ENCODE measurements at regions of chr5 and their contacts with region 1.

Region 1: GRCh38 chr5:113513384-113514288 is at the start of gene YTHDC2:
- DNase-seq: peak; percentile 88
- H3K4me3 ChIP-seq: peak within 1 kb of the TSS; percentile 48 to 83 (median 60)
- H3K27ac ChIP-seq: peak within 1 kb of the TSS; percentile 87 to 94 (median 90)
- H3K4me1 ChIP-seq: peaks cover 0 to 25% (median 10%) of the 10 kb centered on the region in 4 donors
- H3K27me3 ChIP-seq: no peaks in the 10 kb centered on the region
- CTCF ChIP-seq: peak in 4 of 5 experiments; percentile 4 to 38 (median 10)
- EP300 ChIP-seq: no peak
- POLR2A ChIP-seq: peak; percentile 71
- total RNA-seq, gene YTHDC2: 23.6 to 35.4 (median 27.6) TPM

Region 2: DNA sequence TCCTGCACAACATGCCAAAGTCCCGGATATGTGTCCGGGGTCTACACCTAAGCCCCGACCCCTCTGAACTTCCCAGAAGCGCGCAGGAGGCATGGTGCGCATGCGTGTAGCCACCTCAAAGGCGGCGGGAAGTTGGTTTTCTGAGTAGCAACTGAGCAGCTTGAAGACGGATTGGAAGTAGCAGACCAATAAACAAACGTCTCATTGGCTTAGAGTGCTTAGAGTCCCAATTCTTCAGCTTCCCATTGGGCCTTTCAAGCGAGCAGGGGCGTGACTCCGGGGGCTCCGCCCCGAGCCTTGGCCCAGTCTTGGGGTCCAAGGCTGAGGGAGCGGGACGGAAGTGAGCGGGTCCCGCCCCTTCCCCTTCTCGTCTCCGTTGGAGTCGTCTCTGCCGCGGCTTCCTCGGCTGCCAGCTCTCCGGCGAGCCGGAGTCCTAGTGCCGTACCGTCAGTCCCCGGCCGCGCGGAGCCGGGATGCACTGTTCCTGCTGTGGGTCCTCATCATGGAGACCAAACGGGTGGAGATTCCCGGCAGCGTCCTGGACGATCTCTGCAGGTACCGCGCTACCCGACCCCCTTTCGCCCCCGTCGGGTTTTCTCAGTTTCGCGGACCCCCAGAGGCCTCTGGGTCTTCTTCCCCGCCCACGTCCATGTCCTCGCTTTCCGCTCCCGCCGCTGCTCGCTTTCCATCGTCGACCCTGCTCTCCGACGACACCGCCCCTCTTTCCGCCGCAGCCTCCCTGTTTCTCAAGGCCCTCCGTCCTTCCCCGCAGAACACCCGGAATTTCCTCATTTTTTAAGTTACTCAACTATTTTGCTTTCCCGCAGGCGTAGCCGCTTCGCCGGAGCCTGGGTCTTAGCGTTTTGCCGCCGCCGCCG is 537.0 kb before region 1 on chr5 and contains the start of gene DCP2:
- in situ Hi-C with region 1: loop called in 3 of 4 experiments (anchors 25 kb)
- intact Hi-C with region 1: no loop called
- DNase-seq: peak; percentile 95
- H3K4me3 ChIP-seq: peak within 1 kb of the TSS; percentile 72 to 99 (median 86)
- H3K27ac ChIP-seq: peak within 1 kb of the TSS; percentile 91 to 96 (median 93)
- H3K4me1 ChIP-seq: peaks cover 5 to 25% (median 15%) of the 10 kb centered on the region in 4 donors
- H3K27me3 ChIP-seq: no peaks in the 10 kb centered on the region
- CTCF ChIP-seq: peak in 1 of 5 experiments; percentile 12
- EP300 ChIP-seq: no peak
- POLR2A ChIP-seq: peak; percentile 83
- total RNA-seq, gene DCP2: 11.6 to 27.8 (median 20.7) TPM

Region 3: DNA sequence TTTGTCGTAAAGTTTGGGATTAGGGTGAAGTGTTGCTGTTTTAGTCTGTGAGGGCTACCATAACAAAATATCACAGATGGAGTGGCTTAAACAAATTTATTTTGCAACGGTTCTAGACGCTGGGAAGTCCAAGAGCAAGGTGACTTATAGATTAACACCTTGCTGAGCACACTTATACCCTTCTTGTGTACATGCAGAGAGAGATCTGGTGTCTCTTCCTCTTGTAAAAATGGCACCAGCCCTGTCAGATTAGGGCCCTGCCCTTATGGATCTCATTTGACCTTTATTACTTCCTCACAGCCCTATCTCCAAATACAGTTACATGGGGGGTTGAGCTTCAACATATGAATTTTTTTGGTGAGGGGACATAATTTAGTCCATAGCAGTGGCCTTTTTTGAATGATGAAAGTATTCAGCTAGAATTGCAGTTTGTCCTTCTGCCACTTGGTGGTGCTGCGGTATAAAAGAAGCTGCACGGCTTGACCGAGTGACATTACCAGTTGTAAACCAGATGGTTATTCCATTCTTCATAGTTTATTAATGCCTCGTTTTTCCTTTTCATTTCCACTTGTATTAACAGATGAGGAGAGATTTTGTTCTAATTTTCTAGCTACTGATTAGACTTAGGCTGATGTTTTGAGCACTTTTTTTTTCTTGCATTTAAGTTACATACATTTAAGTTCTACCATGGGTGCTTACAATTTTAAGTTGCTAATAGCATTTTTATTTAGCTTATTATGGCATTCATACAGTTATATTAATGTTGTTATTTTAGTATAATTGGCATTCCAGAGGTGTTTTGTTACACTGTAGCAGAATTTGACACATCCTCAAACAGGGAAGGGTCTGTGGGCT is 517.6 kb before region 1 on chr5:
- in situ Hi-C with region 1: loop called (anchors 10 to 25 kb)
- intact Hi-C with region 1: loop called (anchors 5 kb)
- DNase-seq: peak; percentile 73
- H3K4me3 ChIP-seq: no peak overlapping the region
- H3K27ac ChIP-seq: no peak overlapping the region
- H3K4me1 ChIP-seq: peaks cover 0 to 6% (median 2%) of the 10 kb centered on the region in 4 donors
- H3K27me3 ChIP-seq: no peaks in the 10 kb centered on the region
- CTCF ChIP-seq: peak; percentile 72 to 94 (median 87)
- EP300 ChIP-seq: no peak
- POLR2A ChIP-seq: no peak

Region 4: GRCh38 chr5:113102121-113102531 is 411.5 kb before region 1 on chr5:
- in situ Hi-C with region 1: no loop called
- intact Hi-C with region 1: no loop called
- DNase-seq: no peak
- H3K4me3 ChIP-seq: no peak overlapping the region
- H3K27ac ChIP-seq: no peak overlapping the region
- H3K4me1 ChIP-seq: no peaks in the 10 kb centered on the region
- H3K27me3 ChIP-seq: no peaks in the 10 kb centered on the region
- CTCF ChIP-seq: no peak
- EP300 ChIP-seq: no peak
- POLR2A ChIP-seq: no peak

Region 5: GRCh38 chr5:113378959-113379541 is 134.6 kb before region 1 on chr5:
- in situ Hi-C with region 1: loop called in 1 of 4 experiments (anchors 10 kb)
- intact Hi-C with region 1: loop called (anchors 10 kb)
- DNase-seq: peak; percentile 63
- H3K4me3 ChIP-seq: no peak overlapping the region
- H3K27ac ChIP-seq: no peak overlapping the region
- H3K4me1 ChIP-seq: no peaks in the 10 kb centered on the region
- H3K27me3 ChIP-seq: no peaks in the 10 kb centered on the region
- CTCF ChIP-seq: peak; percentile 57 to 72 (median 68)
- EP300 ChIP-seq: no peak
- POLR2A ChIP-seq: no peak

Region 6: DNA sequence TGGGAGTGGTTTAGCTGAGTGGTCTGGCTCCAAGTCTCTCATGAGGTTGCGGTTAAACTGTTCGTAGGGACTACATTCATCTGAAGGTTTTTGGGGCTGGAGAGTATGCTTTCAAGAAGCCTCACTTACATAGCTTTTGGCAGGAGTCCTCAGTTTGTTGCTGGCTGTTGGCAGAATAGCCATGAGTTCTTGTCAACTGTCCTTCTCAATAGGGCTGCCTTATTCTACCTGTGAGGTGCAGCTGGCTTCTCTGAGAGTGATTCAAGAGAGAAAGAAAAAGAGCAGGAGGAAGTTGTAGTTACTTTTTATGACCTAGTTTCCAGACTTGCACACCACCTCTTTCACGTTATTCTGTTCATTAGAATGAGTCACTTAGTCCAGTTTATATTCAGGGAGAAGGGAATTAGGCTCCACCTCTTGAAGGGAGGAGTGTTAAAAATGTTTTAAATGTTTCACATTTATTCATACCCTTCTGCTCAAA is 33.1 kb after region 1 on chr5:
- in situ Hi-C with region 1: no loop called
- intact Hi-C with region 1: no loop called
- DNase-seq: no peak
- H3K4me3 ChIP-seq: no peak overlapping the region
- H3K27ac ChIP-seq: peak overlapping the region in 3 of 4 donors; percentile 3 to 50 (median 15)
- H3K4me1 ChIP-seq: peaks cover 0 to 12% (median 0%) of the 10 kb centered on the region in 4 donors
- H3K27me3 ChIP-seq: no peaks in the 10 kb centered on the region
- CTCF ChIP-seq: no peak
- EP300 ChIP-seq: no peak
- POLR2A ChIP-seq: no peak

Region 7: GRCh38 chr5:114010362-114010761 is 496.7 kb after region 1 on chr5:
- in situ Hi-C with region 1: no loop called
- intact Hi-C with region 1: no loop called
- DNase-seq: no peak
- H3K4me3 ChIP-seq: no peak overlapping the region
- H3K27ac ChIP-seq: no peak overlapping the region
- H3K4me1 ChIP-seq: no peaks in the 10 kb centered on the region
- H3K27me3 ChIP-seq: no peaks in the 10 kb centered on the region
- CTCF ChIP-seq: no peak
- EP300 ChIP-seq: no peak
- POLR2A ChIP-seq: no peak

Measured in transverse colon (tissue), 4 donors.